ENCODE measurements at regions of chr15 and their contacts with region 1.

Region 1: GRCh38 chr15:40367686-40368611 is 9.9 kb downstream of the DISP2 start:
- DNase-seq: peak; percentile 88
- H3K4me3 ChIP-seq: no peak overlapping the region
- H3K27ac ChIP-seq: no peak overlapping the region
- H3K4me1 ChIP-seq: peaks cover 19% of the 10 kb centered on the region
- H3K27me3 ChIP-seq: no peaks in the 10 kb centered on the region
- CTCF ChIP-seq: peak; percentile 60 to 64

Region 2: DNA sequence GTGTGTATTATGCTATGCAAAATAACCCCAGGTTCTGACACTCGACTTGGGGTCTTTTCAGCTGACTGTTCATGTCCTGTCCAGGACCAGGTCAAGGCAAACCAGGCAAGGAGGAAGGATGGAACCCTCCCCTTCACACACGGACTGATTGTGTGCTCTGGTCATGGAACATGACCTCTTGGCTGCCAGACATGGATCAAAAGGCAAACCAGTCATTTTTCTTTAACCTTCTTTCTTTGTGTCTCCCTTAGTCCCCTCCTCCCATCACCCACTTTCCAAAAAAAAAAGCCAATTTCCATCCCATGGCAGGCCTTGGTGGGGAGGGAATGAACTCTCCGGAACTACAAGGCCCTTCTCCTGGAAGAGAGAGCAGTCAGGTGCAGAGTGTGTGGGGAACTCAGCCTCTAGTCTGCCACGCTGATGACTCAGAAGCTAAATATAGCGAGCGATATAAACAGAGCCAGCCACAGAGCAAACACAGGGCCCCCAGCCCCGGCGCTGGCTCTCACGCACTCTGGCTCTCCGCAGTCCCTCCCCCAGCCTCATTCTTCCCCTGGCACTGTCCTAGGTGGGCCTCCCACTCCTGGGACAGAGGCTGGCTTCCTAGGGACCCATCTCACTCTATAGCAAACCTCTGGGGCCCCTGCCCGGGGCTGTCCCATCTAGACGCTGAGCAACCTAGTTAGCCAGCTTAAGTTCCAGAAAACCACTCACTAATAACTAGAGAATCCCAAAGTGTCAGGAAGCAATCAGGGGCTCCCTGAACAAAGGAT is 269.3 kb before region 1 on chr15:
- CTCF ChIA-PET with region 1: no interaction called
- dilution Hi-C with region 1: no loop called
- in situ Hi-C with region 1: no loop called
- intact Hi-C with region 1: no loop called
- DNase-seq: peak; percentile 61
- H3K4me3 ChIP-seq: no peak overlapping the region
- H3K27ac ChIP-seq: no peak overlapping the region
- H3K4me1 ChIP-seq: peaks cover 14% of the 10 kb centered on the region
- H3K27me3 ChIP-seq: no peaks in the 10 kb centered on the region
- CTCF ChIP-seq: no peak

Region 3: DNA sequence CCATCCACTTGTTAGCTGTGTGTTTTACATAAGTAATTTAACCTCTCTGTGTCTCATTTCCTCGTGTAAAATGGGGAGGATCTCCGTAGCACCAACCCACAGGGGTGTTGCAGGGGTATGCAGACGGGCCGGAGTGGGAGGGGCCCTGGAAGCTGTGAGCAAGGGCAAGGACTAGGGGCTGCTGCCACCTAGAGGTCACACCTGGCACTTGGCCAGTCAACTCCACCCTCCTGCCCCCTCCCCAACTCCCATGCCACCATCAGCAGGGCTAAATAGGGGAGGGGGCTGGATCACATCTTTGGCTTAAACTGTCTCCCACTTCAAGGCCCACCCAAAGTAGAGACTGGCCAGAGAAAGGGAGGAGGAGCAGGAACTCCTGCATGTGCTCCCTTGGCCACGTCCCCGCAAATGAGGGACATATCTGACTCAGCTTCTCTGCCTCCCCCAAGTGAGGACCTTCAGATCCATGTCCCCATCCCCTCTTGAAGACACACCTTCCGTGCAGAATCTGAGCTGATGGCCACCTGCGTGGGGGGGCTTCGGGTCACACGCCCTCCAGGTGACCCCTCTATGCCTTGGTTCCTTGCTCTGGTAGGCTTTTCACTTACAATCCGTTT is 29.8 kb before region 1 on chr15:
- CTCF ChIA-PET with region 1: interaction called, 5 read pairs
- dilution Hi-C with region 1: no loop called
- in situ Hi-C with region 1: no loop called
- intact Hi-C with region 1: loop called (anchors 1 kb)
- DNase-seq: peak; percentile 66
- H3K4me3 ChIP-seq: peak overlapping the region in 2 of 3 experiments; percentile 1 to 81
- H3K27ac ChIP-seq: peak overlapping the region; percentile 68
- H3K4me1 ChIP-seq: peaks cover 75% of the 10 kb centered on the region
- H3K27me3 ChIP-seq: no peaks in the 10 kb centered on the region
- CTCF ChIP-seq: peak; percentile 63 to 86

Region 4: DNA sequence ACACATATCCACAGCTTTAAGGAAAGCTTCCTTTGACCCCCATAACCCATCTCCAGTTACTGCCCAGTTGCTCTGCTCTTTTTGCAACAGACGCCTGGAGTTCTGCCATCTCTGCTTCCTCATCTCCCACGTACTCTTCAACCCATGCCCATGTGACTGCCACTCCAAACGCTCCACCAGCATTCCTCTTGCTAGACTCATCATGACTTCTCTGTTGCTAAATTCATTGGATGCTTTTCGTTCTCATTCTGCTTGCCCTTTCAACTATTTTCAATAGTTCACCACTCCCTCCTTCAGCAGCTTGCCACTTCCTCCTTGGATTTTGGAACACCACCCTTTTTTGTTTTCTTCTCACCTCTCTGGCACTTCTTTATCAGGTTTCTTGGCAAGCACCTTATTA is 11.9 kb after region 1 on chr15:
- CTCF ChIA-PET with region 1: no interaction called
- dilution Hi-C with region 1: no loop called
- in situ Hi-C with region 1: no loop called
- intact Hi-C with region 1: loop called (anchors 1 kb)
- DNase-seq: peak; percentile 87
- H3K4me3 ChIP-seq: no peak overlapping the region
- H3K27ac ChIP-seq: no peak overlapping the region
- H3K4me1 ChIP-seq: peaks cover 23% of the 10 kb centered on the region
- H3K27me3 ChIP-seq: no peaks in the 10 kb centered on the region
- CTCF ChIP-seq: no peak

Region 5: GRCh38 chr15:40398413-40398873 is 30.5 kb after region 1 on chr15:
- CTCF ChIA-PET with region 1: no interaction called
- dilution Hi-C with region 1: no loop called
- in situ Hi-C with region 1: no loop called
- intact Hi-C with region 1: no loop called
- DNase-seq: no peak
- H3K4me3 ChIP-seq: no peak overlapping the region
- H3K27ac ChIP-seq: no peak overlapping the region
- H3K4me1 ChIP-seq: no peaks in the 10 kb centered on the region
- H3K27me3 ChIP-seq: no peaks in the 10 kb centered on the region
- CTCF ChIP-seq: no peak